ENCODE measurements at regions of chr5 and their contacts with region 1.

Region 1: DNA sequence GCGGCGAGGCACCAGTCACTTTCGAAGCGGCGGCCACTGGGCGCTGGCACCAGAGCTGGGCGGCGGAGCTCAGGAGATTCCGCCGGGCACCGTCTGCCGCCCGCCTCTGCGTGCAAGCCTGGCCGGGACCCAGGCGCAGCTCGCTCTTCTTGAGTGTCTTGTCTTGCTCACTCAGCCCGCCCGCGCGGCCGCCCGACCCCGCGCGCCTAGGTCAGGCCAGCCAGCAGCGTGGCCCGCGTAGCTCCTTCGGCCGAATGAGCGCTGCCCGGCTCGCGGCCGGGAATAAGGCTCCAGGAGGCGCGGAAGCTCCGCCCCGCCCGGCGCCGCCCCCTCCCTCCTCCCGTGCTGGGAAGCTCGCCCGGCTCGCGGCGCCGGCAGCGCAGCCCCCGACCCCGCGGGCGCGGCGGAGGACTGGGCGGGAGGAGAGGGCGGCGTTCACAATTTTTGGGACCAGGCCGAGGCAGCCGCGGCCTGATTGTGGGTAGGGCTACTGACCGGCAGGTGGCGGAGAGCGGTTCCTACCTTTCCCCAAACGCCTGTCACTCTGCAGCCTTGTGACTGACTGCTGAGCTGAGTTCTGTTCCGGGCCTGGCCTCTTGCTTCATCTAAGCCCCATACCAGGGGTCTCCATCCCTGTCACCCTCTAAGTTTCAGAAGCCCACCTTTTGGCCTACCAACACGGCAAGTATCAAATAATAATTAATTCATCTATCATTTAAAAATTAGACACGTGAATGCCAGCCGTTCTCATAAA is at the start of gene HBEGF:
- DNase-seq: peak; percentile 63
- ATAC-seq: peak; percentile 93
- H3K4me3 ChIP-seq: peak within 1 kb of the TSS; percentile 74
- H3K27ac ChIP-seq: peak within 1 kb of the TSS; percentile 22; the same call in 1 of the 2 replicates
- H3K4me1 ChIP-seq: peaks cover 11% of the 10 kb centered on the region
- H3K27me3 ChIP-seq: no peaks in the 10 kb centered on the region
- CTCF ChIP-seq: peak; percentile 37
- POLR2A ChIP-seq: peak; percentile 98
- RAD21 ChIP-seq: no peak
- total RNA-seq, gene HBEGF: 18.8 and 26.9 TPM in 2 replicates

Region 2: DNA sequence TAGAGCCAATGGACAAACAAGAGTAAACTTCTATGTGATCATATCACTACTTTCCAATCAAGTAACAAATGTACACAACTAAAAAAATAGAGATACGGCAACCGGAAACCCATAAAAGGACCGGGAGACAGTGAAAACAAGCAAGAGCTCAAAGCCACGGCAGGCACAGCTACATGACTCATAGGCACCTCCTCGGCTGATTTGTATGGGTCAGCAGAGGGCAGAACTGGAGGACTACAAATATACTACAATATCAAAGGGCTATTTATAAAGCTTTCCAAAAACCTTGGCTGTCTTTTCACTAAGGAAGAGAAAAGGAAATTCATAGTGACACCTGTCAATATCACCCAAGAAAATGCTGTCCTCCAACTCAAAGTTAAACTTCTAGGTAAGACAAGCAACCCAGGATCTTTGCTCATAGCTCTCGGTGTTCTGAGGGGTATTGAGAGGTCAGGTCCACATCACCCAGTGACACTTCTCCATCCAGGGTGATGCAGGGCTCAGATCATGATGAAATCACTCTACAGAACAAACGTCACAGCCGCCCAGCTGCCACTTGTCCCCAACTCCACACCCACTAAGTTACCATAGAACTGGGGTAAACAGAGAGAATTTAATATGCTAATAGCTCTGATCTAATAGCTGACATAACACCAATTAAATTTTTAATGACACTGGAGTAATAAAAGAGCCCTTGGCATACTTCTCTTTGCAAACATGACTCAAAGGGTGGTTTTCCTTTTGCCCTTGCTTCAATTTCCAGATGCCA is 84.9 kb before region 1 on chr5:
- CTCF ChIA-PET with region 1: interaction called, 15 read pairs
- POLR2A ChIA-PET with region 1: interaction called, 8 read pairs
- dilution Hi-C with region 1: no loop called
- in situ Hi-C with region 1: no loop called
- intact Hi-C with region 1: no loop called
- DNase-seq: peak; percentile 92
- ATAC-seq: peak; percentile 99
- H3K4me3 ChIP-seq: no peak overlapping the region
- H3K27ac ChIP-seq: 0 out of 2 replicates have a peak overlapping the region, but pooled peaks have one; percentile 7
- H3K4me1 ChIP-seq: peaks cover 11% of the 10 kb centered on the region
- H3K27me3 ChIP-seq: no peaks in the 10 kb centered on the region
- CTCF ChIP-seq: no peak
- POLR2A ChIP-seq: no peak
- RAD21 ChIP-seq: peak; percentile 37

Region 3: DNA sequence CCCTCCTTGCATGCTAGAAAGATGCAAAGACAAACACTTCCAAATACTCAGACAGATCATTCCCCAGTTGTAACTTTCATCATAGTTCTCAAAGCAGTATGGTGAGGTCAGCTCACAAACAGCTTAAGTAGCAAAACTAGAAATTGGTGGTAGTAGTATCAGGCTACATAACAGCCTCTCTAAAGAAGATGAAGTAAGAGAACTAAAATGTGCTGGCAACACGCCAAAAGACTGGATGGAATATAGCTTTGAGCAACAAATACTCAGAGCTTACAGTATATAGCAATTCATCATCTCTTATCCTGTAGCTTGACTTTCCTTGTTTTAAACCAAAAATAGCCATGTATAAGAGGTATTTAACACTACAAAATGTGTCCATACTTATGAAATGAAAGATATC is 51.1 kb before region 1 on chr5:
- CTCF ChIA-PET with region 1: interaction called, 6 read pairs
- POLR2A ChIA-PET with region 1: no interaction called
- dilution Hi-C with region 1: no loop called
- in situ Hi-C with region 1: no loop called
- intact Hi-C with region 1: loop called (anchors 5 kb)
- DNase-seq: peak; percentile 99
- ATAC-seq: peak; percentile 86
- H3K4me3 ChIP-seq: no peak overlapping the region
- H3K27ac ChIP-seq: no peak overlapping the region
- H3K4me1 ChIP-seq: peaks cover 11% of the 10 kb centered on the region
- H3K27me3 ChIP-seq: no peaks in the 10 kb centered on the region
- CTCF ChIP-seq: no peak
- POLR2A ChIP-seq: no peak
- RAD21 ChIP-seq: no peak

Region 4: DNA sequence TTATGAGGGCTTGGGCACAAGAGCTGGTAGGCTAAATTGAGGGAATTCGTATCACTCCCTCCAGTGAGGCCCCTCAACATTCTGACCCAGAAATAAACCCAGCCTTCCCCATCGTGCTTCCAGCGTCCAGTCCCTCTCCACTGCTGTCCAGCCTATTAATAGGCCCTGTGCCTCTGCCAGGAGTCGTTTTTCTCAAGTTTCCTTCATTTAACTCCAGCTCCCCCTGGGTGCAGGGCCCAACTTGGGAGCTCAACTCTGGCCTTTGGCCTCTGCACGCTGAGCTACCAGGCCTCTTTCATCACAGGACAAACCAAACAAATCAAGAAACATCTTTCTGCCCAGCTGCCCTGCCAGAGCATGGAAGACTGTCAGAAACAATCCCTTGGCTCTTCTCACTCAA is 10.1 kb before region 1 on chr5:
- CTCF ChIA-PET with region 1: interaction called, 14 read pairs
- POLR2A ChIA-PET with region 1: interaction called, 4 read pairs
- dilution Hi-C with region 1: no loop called
- in situ Hi-C with region 1: no loop called
- intact Hi-C with region 1: no loop called
- DNase-seq: no peak
- ATAC-seq: 0 out of 2 replicates have a peak, but pooled peaks have one; percentile 28
- H3K4me3 ChIP-seq: no peak overlapping the region
- H3K27ac ChIP-seq: no peak overlapping the region
- H3K4me1 ChIP-seq: peaks cover 6% of the 10 kb centered on the region
- H3K27me3 ChIP-seq: no peaks in the 10 kb centered on the region
- CTCF ChIP-seq: no peak
- POLR2A ChIP-seq: no peak
- RAD21 ChIP-seq: no peak

Region 5: DNA sequence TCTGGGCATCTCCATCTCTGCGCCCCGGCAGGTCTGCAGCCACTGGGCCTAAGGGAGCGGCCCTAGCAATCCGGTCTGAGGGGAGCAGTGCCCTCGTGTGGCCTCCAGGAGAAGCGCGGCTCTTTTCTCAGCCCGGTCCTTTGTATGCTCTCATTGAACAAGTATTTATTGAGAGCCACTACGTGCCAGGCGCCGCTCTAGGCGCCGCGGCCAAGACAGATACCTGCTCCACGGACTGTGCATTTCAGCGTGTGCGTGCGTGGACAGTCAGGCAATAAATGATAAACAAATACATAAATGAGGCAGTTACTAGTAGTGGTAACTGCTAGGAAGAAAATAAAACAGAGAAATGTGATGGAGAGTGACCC is 11.2 kb after region 1 on chr5:
- CTCF ChIA-PET with region 1: interaction called, 10 read pairs
- POLR2A ChIA-PET with region 1: no interaction called
- dilution Hi-C with region 1: no loop called
- in situ Hi-C with region 1: no loop called
- intact Hi-C with region 1: no loop called
- DNase-seq: peak; percentile 83
- ATAC-seq: peak; percentile 99
- H3K4me3 ChIP-seq: peak overlapping the region; percentile 5; the same call in 1 of the 2 replicates
- H3K27ac ChIP-seq: no peak overlapping the region
- H3K4me1 ChIP-seq: no peaks in the 10 kb centered on the region
- H3K27me3 ChIP-seq: no peaks in the 10 kb centered on the region; the same call in 1 of the 2 replicates
- CTCF ChIP-seq: peak; percentile 96
- POLR2A ChIP-seq: no peak
- RAD21 ChIP-seq: peak; percentile 87